ENCODE measurements at regions of chr7 and their contacts with region 1.

Region 1: GRCh38 chr7:97027427-97028234 is 3.0 kb upstream of the DLX5 start:
- DNase-seq: peak; percentile 77
- H3K4me3 Mint-ChIP-seq: peak overlapping the region; percentile 41
- H3K27ac Mint-ChIP-seq: no peak overlapping the region
- H3K4me1 Mint-ChIP-seq: peaks cover 34% of the 10 kb centered on the region
- H3K27me3 Mint-ChIP-seq: peaks cover 65% of the 10 kb centered on the region

Region 2: DNA sequence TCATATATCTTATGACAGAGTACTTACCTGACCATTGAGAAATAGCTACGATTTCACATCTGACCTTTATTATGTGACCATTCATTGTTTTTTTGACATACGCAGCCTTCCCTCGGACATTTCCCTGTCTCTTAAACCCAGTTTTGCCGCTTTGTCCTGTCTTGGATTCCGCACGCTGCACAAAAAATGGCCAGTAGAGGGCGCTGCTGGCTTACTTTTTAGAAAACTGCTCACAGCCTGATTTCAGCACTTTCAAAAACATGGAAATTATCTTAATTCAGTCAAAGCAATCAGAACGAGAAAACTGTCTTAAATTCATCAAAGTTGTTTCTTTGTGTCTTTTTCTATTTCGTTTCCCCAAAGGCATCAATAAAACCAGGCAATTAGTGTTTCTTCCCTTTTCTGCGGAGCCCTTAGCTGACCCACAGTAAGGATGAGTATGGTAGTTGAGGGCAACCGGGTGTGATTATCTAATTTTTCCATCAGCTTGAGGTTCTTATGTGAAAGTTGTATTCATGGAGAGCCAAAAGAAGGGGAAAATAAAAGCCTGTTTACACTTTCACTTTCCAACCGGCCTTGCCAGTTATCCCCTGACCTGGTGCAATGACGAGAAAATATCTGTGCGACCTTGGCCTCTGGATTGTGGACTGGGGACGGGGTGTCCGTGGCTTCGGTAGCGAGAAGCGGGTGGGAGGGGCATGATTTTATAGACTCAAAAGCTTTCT is 1110.9 kb before region 1 on chr7:
- CTCF ChIA-PET with region 1: interaction called, 29 read pairs
- DNase-seq: peak; percentile 80
- H3K4me3 Mint-ChIP-seq: no peak overlapping the region
- H3K27ac Mint-ChIP-seq: no peak overlapping the region
- H3K4me1 Mint-ChIP-seq: peaks cover 2% of the 10 kb centered on the region
- H3K27me3 Mint-ChIP-seq: peaks cover 13% of the 10 kb centered on the region